HEK293 (cell line): ENCODE measurements at regions of chr5 and their contacts with region 1.

Region 1: GRCh38 chr5:136212252-136212721 is 19.3 kb upstream of the SMIM32 start:
- H3K4me3 ChIP-seq: no peak overlapping the region
- H3K27ac ChIP-seq: no peak overlapping the region
- H3K4me1 ChIP-seq: no peaks in the 10 kb centered on the region
- CTCF ChIP-seq: peak; percentile 63

Region 2: GRCh38 chr5:135880278-135880677 is 332.0 kb before region 1 on chr5:
- CTCF ChIA-PET with region 1: interaction called, 13 read pairs
- POLR2A ChIA-PET with region 1: no interaction called
- H3K4me3 ChIP-seq: no peak overlapping the region
- H3K27ac ChIP-seq: no peak overlapping the region
- H3K4me1 ChIP-seq: peaks cover 7% of the 10 kb centered on the region
- CTCF ChIP-seq: no peak

Region 3: GRCh38 chr5:136080483-136081216 is 131.6 kb before region 1 on chr5:
- CTCF ChIA-PET with region 1: interaction called, 12 read pairs
- POLR2A ChIA-PET with region 1: no interaction called
- H3K4me3 ChIP-seq: peak overlapping the region; percentile 44
- H3K27ac ChIP-seq: peak overlapping the region; percentile 43; the same call in 1 of the 2 replicates
- H3K4me1 ChIP-seq: peaks cover 3% of the 10 kb centered on the region; the same call in 1 of the 2 replicates
- CTCF ChIP-seq: no peak

Region 4: GRCh38 chr5:136137497-136138220 is 74.6 kb before region 1 on chr5:
- CTCF ChIA-PET with region 1: no interaction called
- POLR2A ChIA-PET with region 1: no interaction called
- H3K4me3 ChIP-seq: no peak overlapping the region
- H3K27ac ChIP-seq: no peak overlapping the region
- H3K4me1 ChIP-seq: peaks cover 33% of the 10 kb centered on the region
- CTCF ChIP-seq: no peak

Region 5: DNA sequence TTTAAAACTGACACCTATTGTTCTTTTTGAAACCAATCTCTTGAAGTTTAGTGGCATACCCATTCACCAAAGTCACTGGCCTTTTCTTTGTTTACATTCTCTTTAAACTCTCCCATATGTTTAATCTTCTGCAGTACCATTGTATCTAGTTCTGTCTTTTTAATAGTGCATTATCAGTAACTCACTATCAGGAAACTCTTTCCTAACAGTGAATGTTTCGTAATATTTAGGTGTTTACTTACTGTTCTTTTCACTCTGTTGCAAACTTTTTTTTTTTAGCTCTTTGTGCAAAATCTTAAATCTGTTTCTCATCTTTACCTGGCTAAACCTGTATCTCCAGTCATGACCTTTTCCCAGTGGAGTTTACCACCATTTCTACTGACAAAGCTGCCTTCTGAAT is 62.4 kb before region 1 on chr5:
- CTCF ChIA-PET with region 1: no interaction called
- POLR2A ChIA-PET with region 1: no interaction called
- H3K4me3 ChIP-seq: no peak overlapping the region
- H3K27ac ChIP-seq: no peak overlapping the region
- H3K4me1 ChIP-seq: peaks cover 35% of the 10 kb centered on the region
- CTCF ChIP-seq: no peak

Region 6: DNA sequence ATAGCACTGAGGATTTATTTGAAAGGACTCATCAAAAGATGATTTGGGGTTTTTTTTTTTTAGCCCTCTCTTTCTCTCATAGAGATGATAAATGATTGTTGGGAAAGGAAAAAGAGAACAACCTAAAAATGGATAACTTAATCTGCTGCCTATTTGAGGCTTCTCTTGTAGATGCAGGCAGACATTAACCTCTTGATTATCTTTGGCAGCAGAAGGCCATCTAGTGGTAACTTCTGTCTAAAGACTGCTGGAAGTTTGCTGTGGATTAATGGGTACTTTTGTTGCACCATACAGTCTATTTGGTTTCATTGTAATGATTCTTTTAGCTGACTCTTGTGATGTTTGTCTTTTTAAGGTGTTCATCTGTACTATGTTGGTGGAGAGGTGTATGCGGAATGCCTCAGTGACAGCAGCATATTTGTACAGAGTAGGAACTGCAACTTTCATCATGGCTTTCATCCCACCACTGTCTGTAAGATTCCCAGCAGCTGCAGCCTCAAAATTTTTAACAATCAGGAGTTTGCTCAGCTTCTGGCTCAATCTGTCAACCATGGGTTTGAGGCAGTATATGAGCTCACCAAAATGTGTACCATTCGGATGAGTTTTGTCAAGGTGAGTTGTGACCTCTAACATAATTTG is 38.1 kb before region 1 on chr5:
- CTCF ChIA-PET with region 1: interaction called, 16 read pairs
- POLR2A ChIA-PET with region 1: no interaction called
- H3K4me3 ChIP-seq: no peak overlapping the region
- H3K27ac ChIP-seq: no peak overlapping the region
- H3K4me1 ChIP-seq: no peaks in the 10 kb centered on the region
- CTCF ChIP-seq: peak; percentile 46

Region 7: DNA sequence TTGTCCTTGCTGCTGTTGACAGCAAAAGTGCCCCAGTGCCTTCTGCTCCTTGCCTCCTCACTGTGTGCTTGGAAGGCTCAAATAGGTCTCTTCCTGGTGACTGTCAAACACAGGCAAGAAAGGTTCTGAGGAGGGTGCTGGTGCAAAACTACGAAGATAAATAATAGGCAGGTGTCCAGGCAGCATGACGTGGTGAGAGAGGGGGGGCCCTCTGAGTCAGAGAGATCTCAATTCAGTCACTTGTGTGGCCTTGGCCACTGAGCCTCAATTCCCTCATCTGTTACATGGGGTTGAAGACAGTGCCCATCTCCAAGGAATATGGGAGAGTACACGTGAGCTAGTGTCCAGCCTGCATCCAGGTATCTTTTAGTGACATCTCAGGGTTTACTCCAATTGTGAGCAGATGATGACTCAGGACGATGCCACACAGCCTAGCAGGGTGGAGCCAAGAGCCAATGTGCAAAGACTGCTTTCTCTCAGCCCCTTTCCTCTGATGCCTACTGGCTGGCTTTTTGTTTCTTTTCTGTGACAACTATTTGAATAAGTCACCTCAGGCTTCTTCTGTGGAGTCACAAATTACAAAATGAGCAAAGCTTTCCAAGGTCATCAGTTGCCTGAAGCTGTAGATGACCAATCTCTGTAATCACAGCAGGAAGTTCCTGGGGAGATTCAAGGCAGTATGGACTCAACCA is 10.4 kb after region 1 on chr5:
- CTCF ChIA-PET with region 1: interaction called, 18 read pairs
- POLR2A ChIA-PET with region 1: no interaction called
- H3K4me3 ChIP-seq: no peak overlapping the region
- H3K27ac ChIP-seq: no peak overlapping the region
- H3K4me1 ChIP-seq: no peaks in the 10 kb centered on the region
- CTCF ChIP-seq: no peak